ENCODE measurements at regions of chr11 and their contacts with region 1.

Region 1: GRCh38 chr11:12687740-12688139 is 13.5 kb downstream of the TEAD1 start:
- DNase-seq: no peak
- ATAC-seq: no peak
- H3K4me3 ChIP-seq: no peak overlapping the region
- H3K27ac ChIP-seq: peak overlapping the region in 2 of 12 donors; percentile 9 to 43
- H3K4me1 ChIP-seq: peaks cover 8 to 88% (median 63%) of the 10 kb centered on the region in 12 donors
- H3K27me3 ChIP-seq: peaks cover 0 to 8% (median 0%) of the 10 kb centered on the region in 9 donors
- CTCF ChIP-seq: no peak
- POLR2A ChIP-seq: no peak

Region 2: GRCh38 chr11:12724301-12725046 is 36.7 kb after region 1 on chr11:
- intact Hi-C with region 1: loop called in 1 of 10 experiments (anchors 5 kb)
- DNase-seq: peak; percentile 70 to 80 (median 73)
- ATAC-seq: peak in 3 of 4 donors; percentile 39 to 61 (median 45)
- H3K4me3 ChIP-seq: no peak overlapping the region
- H3K27ac ChIP-seq: peak overlapping the region in 9 of 12 donors; percentile 1 to 79 (median 35)
- H3K4me1 ChIP-seq: peaks cover 11 to 81% (median 54%) of the 10 kb centered on the region in 12 donors
- H3K27me3 ChIP-seq: no peaks in the 10 kb centered on the region
- CTCF ChIP-seq: no peak
- POLR2A ChIP-seq: no peak